HepG2 (cell line): ENCODE measurements at regions of chrX and their contacts with region 1.

Region 1: DNA sequence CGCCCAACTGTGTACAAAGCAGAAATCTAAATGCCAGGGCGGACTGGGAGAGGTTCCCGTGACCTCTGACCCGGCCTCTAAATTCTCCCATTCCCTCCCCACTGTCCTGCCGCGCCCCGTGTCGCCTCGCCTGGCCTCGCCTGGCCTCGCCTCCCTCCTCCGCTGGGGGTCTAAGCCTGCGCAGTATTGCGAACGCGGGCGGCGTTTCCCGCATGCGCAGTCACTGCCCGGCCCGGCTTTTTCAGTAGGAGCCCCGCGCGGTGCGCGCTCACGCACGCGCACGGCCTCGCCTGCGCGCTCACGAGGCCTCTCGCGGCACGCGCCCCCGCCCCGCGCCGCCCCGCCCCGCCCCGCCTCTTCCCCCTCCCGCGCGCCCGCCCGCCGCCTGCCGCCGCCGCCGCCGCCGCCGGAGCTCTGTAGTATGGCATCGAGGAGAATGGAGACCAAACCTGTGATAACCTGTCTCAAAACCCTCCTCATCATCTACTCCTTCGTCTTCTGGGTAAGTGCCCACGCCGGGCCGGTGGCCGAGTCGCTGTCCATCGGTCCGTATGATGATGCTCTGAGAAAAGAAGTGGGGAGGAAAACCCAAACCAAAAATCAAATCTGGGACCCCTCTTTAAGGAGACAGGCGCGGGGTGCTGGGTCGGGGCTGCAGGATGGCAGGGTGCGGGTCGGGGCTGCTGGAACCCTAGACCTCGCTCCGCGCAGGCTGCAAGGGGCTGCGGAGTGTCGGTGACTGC is at the start of gene TSPAN7:
- DNase-seq: peak; percentile 46
- ATAC-seq: peak; percentile 74
- H3K4me3 ChIP-seq: peak within 1 kb of the TSS; percentile 63 to 71 (median 65)
- H3K27ac ChIP-seq: peak within 1 kb of the TSS; percentile 38
- H3K4me1 ChIP-seq: 0 out of 2 replicates have a peak, but pooled peaks cover 8% of the 10 kb centered on the region
- H3K27me3 ChIP-seq: no peaks in the 10 kb centered on the region
- CTCF ChIP-seq: no peak
- EP300 ChIP-seq: no peak
- POLR2A ChIP-seq: peak in 1 of 2 experiments; percentile 61; a peak in 2 of 4 replicates
- RAD21 ChIP-seq: no peak
- total RNA-seq, gene TSPAN7: 12.8 and 21.4 TPM in 2 replicates

Region 2: DNA sequence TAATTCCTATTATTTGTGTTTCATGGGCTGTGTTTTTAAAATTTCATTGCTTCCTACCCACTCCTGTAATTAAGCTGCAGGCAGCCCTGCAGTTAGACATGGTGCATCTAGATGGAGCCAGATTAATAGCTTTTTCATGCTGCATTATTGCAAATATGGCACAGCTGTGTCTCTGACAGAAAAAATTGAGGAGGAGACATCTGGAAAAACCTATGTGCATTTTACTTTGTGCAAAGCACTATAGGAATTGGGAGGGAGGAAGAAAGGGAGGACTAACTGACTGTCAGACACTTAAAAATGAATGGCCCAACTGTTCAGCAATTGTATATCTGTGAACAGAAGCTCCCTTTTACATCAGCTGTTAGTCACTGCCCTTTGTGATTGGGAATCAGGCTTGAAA is 225.9 kb before region 1 on chrX:
- CTCF ChIA-PET with region 1: no interaction called
- POLR2A ChIA-PET with region 1: no interaction called
- in situ Hi-C with region 1: no loop called
- intact Hi-C with region 1: loop called (anchors 5 kb)
- DNase-seq: no peak
- ATAC-seq: peak; percentile 61
- H3K4me3 ChIP-seq: no peak overlapping the region
- H3K27ac ChIP-seq: no peak overlapping the region
- H3K4me1 ChIP-seq: peaks cover 38% of the 10 kb centered on the region
- H3K27me3 ChIP-seq: no peaks in the 10 kb centered on the region
- CTCF ChIP-seq: peak; percentile 51
- EP300 ChIP-seq: no peak
- POLR2A ChIP-seq: no peak
- RAD21 ChIP-seq: peak; percentile 31; the same call in 1 of the 2 replicates

Region 3: GRCh38 chrX:38636949-38637819 is 75.9 kb after region 1 on chrX:
- CTCF ChIA-PET with region 1: no interaction called
- POLR2A ChIA-PET with region 1: interaction called, 3 read pairs
- in situ Hi-C with region 1: no loop called
- intact Hi-C with region 1: loop called (anchors 5 kb)
- DNase-seq: peak; percentile 82
- ATAC-seq: peak; percentile 89
- H3K4me3 ChIP-seq: no peak overlapping the region
- H3K27ac ChIP-seq: peak overlapping the region; percentile 85
- H3K4me1 ChIP-seq: peaks cover 79% of the 10 kb centered on the region
- H3K27me3 ChIP-seq: no peaks in the 10 kb centered on the region
- CTCF ChIP-seq: no peak
- EP300 ChIP-seq: peak in 1 of 2 experiments; percentile 82; a peak in 2 of 4 replicates
- POLR2A ChIP-seq: no peak
- RAD21 ChIP-seq: no peak